Activated T-helper 1 cell treated with anti-CD3 and anti-CD28 coated beads, Interleukin-12 subunit alpha, Interleukin-12 subunit beta, Interleukin-2, Interleukin-4 antibody, amounts not matched to agents 30 ng/mL and 10 ng/mL and 1 ng/mL, durations not matched to agents 14 hours and 24 hours and 36 hours (primary cell): ENCODE measurements at regions of chr12 and their contacts with region 1.

Region 1: DNA sequence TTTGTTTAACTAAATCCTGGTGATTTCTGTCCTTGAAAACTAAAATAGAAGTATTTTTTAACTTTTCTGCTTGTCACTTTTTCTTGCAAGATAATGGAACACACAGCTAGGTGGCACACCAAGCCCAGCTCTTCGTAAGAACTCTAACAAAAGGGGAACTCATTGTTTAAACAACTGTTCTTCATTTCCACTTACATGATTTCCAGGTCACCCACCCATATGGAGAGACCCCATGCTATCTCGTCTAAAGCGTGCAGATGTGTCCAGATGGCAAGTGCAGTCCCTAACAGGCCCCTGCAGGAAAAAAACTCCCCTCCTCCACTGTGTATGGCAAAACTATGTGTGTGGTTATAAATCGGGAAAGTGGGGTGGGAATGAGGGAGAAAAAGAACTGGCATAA is 43.3 kb upstream of the NT5DC3 start:
- DNase-seq: no peak
- H3K4me3 Mint-ChIP-seq: no peak overlapping the region
- H3K27ac Mint-ChIP-seq: no peak overlapping the region
- H3K4me1 Mint-ChIP-seq: peaks cover 48% of the 10 kb centered on the region
- H3K27me3 Mint-ChIP-seq: peaks cover 3% of the 10 kb centered on the region

Region 2: DNA sequence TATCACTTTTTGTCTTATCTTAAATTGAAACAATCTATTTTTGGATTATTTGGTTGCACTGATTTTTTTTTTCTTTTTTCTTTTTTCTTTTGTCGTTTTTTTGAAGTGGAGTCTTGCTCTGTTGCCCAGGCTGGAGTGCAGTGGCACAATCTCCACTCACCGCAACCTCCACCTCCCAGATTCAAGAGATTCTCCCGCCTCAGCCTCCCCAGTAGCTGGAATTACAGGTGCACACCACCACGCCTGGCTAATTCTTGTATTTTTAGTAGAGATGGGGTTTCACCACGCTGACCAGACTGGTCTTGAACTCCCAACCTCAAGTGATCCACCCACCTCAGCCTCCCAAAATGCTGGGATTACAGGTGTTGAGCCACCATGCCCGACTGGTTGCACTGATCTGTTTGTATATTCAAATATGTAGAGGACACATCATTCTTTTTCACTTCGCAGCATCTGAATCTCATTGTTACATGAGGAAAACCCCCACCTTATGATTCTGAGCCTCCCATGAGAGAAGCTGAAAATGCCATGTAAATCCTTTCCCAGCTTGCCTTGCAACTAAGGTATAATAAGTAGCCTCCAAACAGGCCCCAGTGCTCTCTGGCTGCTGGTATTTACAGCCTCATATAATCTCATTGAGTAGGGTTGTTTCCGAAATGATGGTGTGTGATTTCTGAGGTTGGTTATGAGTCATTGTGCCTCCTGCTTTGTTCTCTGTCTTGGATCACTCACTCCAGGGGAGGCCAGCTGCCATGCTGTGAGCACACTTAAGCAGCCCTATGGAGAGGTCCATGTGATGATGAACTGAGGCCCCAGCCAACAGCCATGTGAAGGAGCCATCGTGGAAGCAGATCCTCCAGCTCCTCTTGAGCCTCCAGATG is 40.7 kb after region 1 on chr12:
- intact Hi-C with region 1: loop called (anchors 1 kb)
- DNase-seq: peak; percentile 51
- H3K4me3 Mint-ChIP-seq: peak overlapping the region; percentile 70
- H3K27ac Mint-ChIP-seq: peak overlapping the region; percentile 81
- H3K4me1 Mint-ChIP-seq: peaks cover 50% of the 10 kb centered on the region
- H3K27me3 Mint-ChIP-seq: peaks cover 2% of the 10 kb centered on the region

Region 3: DNA sequence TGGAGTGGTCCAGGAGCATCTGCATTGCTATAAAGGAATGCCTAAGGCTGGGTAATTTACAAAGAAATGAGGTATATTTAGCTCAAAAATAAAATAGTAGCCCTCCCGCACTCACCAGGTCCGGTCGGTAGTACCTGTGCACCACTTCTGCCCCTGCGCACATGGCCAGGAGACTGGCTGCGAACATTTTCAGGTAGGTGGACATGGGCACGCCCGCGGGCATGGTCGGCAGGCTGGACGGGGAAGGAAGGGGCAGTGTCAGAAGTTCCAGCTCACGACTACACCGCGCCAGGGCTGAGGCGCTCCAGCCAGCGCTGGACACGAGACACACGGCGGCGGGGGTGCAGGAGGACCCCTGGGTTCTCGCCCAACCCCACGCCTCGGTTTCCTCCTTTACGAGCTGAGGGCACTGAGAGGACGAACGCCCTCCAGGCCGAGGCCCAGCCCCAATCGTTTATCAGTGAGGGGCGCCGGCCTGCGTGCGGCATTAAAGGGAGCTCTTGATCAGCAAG is 72.3 kb after region 1 on chr12:
- intact Hi-C with region 1: loop called (anchors 1 kb)
- DNase-seq: peak; percentile 3
- H3K4me3 Mint-ChIP-seq: peak overlapping the region; percentile 100
- H3K27ac Mint-ChIP-seq: peak overlapping the region; percentile 100
- H3K4me1 Mint-ChIP-seq: peaks cover 61% of the 10 kb centered on the region
- H3K27me3 Mint-ChIP-seq: no peaks in the 10 kb centered on the region